ENCODE measurements at regions of chr20 and their contacts with region 1.

Region 1: DNA sequence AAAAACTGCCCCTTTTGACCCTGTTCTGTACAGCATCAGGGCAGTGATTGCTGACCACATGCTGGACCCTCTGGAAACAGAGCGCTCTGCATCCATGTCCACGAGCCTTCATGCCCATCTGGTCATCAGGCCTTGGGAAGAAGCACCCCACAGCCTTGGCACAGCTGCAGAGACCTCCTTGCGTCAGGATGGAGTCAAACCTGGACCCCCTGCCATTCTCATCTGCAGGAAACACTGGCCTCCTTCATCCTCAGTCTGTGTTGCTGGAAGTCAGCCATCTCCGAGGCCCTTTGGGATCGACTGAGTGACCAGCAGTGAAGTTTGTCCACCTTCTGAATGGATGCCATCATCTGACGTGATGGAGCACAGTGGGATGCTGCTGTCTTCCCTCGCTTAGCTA is 2138.3 kb upstream of the DEFB115 start:
- DNase-seq: peak in 1 of 2 donors; percentile 54
- ATAC-seq: no peak
- H3K4me3 ChIP-seq: no peak overlapping the region
- H3K27ac ChIP-seq: no peak overlapping the region
- H3K4me1 ChIP-seq: no peaks in the 10 kb centered on the region
- H3K27me3 ChIP-seq: no peaks in the 10 kb centered on the region
- CTCF ChIP-seq: no peak

Region 2: GRCh38 chr20:29079769-29080690 is 39.1 kb before region 1 on chr20:
- intact Hi-C with region 1: no loop called
- DNase-seq: peak in 1 of 2 donors; percentile 58
- ATAC-seq: peak in 1 of 4 donors; percentile 51
- H3K4me3 ChIP-seq: no peak overlapping the region
- H3K27ac ChIP-seq: no peak overlapping the region
- H3K4me1 ChIP-seq: no peaks in the 10 kb centered on the region
- H3K27me3 ChIP-seq: no peaks in the 10 kb centered on the region
- CTCF ChIP-seq: no peak

Region 3: DNA sequence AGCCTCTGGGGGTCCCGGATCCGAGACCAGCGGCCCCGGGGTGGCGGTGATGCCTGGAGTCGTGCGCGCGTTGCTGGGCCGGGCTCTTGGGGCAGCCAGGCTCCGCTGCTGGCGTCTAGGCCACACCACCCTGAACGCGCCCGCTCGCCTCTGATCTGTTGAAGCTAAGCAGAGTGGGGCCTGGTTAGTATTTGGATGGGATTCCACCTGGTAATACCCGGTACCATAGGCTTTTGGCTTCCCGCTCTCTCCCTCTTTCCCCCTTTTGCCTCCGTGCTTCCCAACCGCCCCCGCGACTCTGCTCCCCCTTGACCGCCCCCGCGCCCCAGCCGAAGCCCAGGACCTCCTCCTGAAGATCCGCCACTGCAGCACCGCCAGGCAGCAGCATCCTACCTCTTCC is 754.8 kb after region 1 on chr20:
- intact Hi-C with region 1: loop called in 1 of 2 experiments (anchors 10 kb)
- DNase-seq: peak; percentile 32 to 72
- ATAC-seq: no peak
- H3K4me3 ChIP-seq: no peak overlapping the region
- H3K27ac ChIP-seq: no peak overlapping the region
- H3K4me1 ChIP-seq: no peaks in the 10 kb centered on the region
- H3K27me3 ChIP-seq: no peaks in the 10 kb centered on the region
- CTCF ChIP-seq: no peak

Measured in psoas muscle (tissue), 8 donors.